ENCODE measurements at regions of chr12 and their contacts with region 1.

Region 1: DNA sequence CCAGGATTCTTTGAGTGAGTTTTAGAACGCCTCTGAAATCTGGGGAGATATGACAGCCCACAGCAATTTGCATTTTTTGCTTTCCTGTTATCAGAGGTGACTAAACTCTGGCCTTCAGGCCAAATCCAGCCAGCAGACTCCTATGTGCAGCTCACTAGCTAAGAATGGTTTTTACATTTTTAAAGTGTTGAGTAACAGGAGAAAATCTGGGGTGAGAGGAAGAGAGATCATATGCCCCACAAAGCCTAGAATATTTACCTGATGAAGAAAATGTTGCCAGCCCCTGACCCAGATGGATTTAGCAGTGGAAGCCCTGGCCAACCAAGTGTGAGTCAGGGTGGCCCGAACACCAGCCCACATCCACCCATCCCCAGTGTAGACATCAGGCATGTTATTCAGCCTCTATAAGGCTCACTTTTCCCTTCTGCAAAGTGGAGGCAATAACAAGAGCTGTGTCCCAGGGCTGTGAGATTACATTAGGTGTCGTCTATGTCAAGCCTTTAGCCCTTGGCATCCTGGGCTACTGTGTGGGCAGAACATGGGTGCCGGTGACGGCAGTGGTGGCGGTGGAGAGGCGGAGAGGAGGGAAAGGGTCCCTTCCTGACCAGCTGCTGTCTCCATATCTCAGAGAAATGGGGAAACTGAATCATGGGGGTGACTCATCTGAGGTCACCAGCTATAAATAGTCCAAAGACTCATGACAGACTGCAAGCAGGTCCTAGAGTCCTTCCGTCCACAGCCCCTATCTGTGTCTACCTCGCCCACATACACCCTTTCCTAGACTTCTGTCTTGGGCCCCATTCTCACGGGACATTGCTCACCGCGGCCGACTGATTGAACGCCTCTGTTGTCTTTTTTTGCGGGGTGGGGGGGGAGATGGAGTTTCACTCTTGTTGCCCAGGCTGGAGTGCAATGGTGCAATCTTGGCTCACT is 32.6 kb upstream of the CD9 start:
- DNase-seq: peak; percentile 82
- H3K4me3 Mint-ChIP-seq: peak overlapping the region; percentile 41
- H3K27ac Mint-ChIP-seq: peak overlapping the region; percentile 96
- H3K4me1 Mint-ChIP-seq: peaks cover 26% of the 10 kb centered on the region
- H3K27me3 Mint-ChIP-seq: no peaks in the 10 kb centered on the region

Region 2: DNA sequence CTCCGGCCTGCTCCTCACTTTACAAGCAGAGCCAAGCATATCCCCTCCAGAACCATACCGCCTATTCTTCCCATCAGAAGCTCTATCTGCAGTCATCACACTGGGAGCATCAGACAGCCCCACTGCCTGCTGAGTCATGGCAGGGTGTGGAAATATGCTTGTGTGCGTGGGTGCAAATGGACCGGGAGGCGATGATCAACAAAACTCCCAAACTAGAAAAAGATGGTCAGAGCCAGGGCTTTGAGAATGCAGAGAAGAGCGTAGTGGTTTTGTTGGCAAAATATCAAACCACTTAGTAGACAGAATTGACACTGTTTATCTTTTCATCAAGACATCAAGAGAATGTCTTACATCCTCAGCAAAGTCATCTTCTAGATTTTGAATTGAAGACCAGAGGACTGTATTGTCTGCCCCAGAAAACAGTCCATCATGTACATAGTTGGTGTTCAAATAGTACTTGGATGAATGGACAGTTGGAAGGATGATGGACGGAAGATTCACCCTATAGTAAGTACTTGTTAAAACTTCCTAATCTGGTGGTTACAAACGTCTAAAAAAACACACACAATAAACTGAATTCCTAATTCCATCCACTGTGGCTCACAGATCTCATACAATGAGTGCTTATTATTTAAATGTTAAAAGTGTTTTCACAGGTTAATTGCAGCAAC is 98.0 kb before region 1 on chr12:
- intact Hi-C with region 1: loop called (anchors 2 kb)
- DNase-seq: peak; percentile 61
- H3K4me3 Mint-ChIP-seq: peak overlapping the region; percentile 25
- H3K27ac Mint-ChIP-seq: peak overlapping the region; percentile 78
- H3K4me1 Mint-ChIP-seq: peaks cover 24% of the 10 kb centered on the region
- H3K27me3 Mint-ChIP-seq: peaks cover 22% of the 10 kb centered on the region

Region 3: DNA sequence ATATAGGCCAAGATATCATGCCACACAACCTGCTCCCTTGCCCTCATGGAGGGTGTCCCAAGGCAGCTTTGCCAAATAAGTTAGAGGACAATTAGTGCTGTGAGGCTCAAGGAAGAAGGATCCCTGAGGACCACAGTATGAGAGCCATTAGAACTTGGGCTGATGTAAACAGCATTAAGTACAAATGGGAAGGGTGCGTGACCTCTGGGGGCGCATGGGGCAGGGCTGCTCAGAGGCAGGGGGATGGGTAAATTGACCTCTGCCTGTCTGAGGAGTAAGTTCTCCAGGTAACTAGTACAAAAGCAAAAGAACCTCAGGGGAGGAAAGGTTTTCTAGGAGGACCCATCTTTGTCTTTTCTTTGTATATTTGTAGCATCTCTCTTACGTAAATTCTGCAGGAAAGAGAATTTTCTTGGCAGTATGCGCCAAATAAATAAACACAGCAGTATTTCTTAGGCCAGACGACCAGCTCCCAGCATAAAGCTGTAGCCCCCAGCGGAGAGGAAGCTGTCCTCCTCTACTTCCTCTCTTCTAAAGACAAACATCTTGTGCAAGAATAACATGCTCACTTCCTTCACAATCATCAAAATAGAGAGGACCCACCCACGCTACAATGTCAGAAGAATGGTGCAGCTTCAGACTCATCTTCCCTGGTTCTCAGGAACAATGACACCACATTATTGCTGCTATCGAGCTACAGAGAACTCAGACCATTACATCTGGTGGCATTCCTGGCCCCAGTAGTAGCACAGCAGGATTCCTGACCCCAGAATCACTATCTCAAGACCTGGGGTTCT is 26.7 kb before region 1 on chr12:
- intact Hi-C with region 1: loop called (anchors 1 kb)
- DNase-seq: peak; percentile 71
- H3K4me3 Mint-ChIP-seq: peak overlapping the region; percentile 44
- H3K27ac Mint-ChIP-seq: peak overlapping the region; percentile 92
- H3K4me1 Mint-ChIP-seq: peaks cover 34% of the 10 kb centered on the region
- H3K27me3 Mint-ChIP-seq: no peaks in the 10 kb centered on the region

Region 4: GRCh38 chr12:6267139-6267721 is 99.6 kb after region 1 on chr12:
- intact Hi-C with region 1: loop called (anchors 1 kb)
- DNase-seq: peak; percentile 67
- H3K4me3 Mint-ChIP-seq: no peak overlapping the region
- H3K27ac Mint-ChIP-seq: peak overlapping the region; percentile 81
- H3K4me1 Mint-ChIP-seq: peaks cover 16% of the 10 kb centered on the region
- H3K27me3 Mint-ChIP-seq: peaks cover 6% of the 10 kb centered on the region

Region 5: DNA sequence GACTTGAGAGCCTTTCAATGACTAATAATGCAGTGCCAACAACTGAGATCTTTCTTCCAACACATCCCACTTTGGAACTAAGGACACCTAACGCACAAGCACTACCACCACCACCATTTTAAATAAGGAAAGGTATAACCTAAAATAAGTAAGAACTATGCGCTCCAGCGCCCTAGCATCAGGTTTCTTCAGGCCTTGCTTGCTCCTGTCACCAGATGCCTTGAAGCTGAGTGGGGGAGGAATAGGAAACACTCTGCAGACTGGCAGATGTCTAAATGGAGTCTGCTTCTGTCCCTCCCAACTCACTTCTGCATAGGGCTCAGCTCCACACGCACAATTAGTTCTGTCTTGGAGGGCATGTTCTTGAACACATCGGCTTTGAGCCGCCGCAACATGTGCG is 424.5 kb after region 1 on chr12:
- intact Hi-C with region 1: no loop called
- DNase-seq: no peak
- H3K4me3 Mint-ChIP-seq: no peak overlapping the region
- H3K27ac Mint-ChIP-seq: peak overlapping the region; percentile 4
- H3K4me1 Mint-ChIP-seq: peaks cover 11% of the 10 kb centered on the region
- H3K27me3 Mint-ChIP-seq: no peaks in the 10 kb centered on the region

Measured in activated CD4-positive, alpha-beta T cell treated with anti-CD3 and anti-CD28 coated beads, Interleukin-2, amount 10 ng/mL, durations not matched to agents 24 days and 14 days (primary cell).